Heart right ventricle (tissue), 16 donors: ENCODE measurements at regions of chr12 and their contacts with region 1.

Region 1: GRCh38 chr12:79935021-79935623 is at the start of gene PPP1R12A:
- DNase-seq: peak; percentile 98
- ATAC-seq: peak; percentile 97 to 100 (median 98)
- H3K4me3 ChIP-seq: peak within 1 kb of the TSS; percentile 74 to 97 (median 87)
- H3K27ac ChIP-seq: peak within 1 kb of the TSS; percentile 90 to 98 (median 96)
- H3K4me1 ChIP-seq: peaks cover 0 to 51% (median 44%) of the 10 kb centered on the region in 9 donors
- H3K27me3 ChIP-seq: no peaks in the 10 kb centered on the region
- CTCF ChIP-seq: peak in 6 of 9 donors; percentile 16 to 40 (median 28)
- total RNA-seq, gene PPP1R12A: 46.3 to 73.5 (median 60.5) TPM

Region 2: DNA sequence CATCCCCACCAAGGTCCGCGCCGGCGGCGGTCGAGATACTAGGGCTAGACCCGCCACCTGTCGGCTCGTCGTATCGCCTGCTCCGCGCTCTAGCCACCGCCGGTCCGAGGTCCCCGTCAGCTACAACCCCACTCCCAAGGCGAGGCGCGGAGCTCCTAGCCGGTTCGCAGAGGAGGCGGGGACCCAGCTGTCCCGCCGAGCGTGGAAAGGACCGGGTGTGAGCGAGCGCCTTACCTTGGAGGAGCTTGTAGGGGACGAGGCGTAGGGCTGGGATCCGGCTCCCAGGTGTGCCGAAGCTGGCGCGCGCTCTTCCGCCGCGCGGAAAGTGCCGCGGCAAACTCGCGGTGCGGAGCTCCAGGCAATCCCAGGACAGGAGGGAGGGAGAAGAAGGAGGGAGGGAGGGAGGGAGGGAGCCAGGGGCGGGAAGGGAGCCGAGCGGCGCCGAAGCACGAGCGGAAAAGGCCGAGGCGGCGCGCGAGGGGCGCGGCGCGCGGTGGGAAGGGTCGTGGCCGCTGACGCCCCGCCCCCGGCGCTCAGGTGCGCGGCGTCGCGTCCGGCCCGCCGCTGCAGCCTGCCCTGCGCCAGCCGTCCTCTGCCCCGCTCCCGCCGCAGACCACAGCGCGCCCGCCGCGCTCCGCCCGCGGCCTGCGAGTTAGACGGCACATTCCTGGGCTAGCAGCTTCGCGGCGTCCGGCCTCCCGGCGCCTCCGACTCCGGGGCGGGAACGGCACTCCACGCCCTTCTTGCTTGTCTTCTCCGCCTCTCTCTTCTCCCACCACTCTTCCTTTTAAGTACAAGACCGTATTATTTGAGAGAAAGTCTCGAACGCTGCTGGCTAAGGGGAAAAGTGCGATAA is 244.3 kb before region 1 on chr12 and contains the start of gene PAWR:
- intact Hi-C with region 1: loop called in 2 of 10 experiments (anchors 1 to 10 kb)
- DNase-seq: peak; percentile 22 to 53
- ATAC-seq: peak; percentile 51 to 85 (median 63)
- H3K4me3 ChIP-seq: peak within 1 kb of the TSS; percentile 68 to 92 (median 86)
- H3K27ac ChIP-seq: peak within 1 kb of the TSS in 9 of 10 donors; percentile 53 to 80 (median 73)
- H3K4me1 ChIP-seq: peaks cover 0 to 31% (median 8%) of the 10 kb centered on the region in 9 donors
- H3K27me3 ChIP-seq: peaks cover 0 to 45% (median 7%) of the 10 kb centered on the region in 7 donors
- CTCF ChIP-seq: peak in 4 of 9 donors; percentile 12 to 44 (median 22)
- total RNA-seq, gene PAWR: 3.5 to 16.6 (median 10.2) TPM

Region 3: DNA sequence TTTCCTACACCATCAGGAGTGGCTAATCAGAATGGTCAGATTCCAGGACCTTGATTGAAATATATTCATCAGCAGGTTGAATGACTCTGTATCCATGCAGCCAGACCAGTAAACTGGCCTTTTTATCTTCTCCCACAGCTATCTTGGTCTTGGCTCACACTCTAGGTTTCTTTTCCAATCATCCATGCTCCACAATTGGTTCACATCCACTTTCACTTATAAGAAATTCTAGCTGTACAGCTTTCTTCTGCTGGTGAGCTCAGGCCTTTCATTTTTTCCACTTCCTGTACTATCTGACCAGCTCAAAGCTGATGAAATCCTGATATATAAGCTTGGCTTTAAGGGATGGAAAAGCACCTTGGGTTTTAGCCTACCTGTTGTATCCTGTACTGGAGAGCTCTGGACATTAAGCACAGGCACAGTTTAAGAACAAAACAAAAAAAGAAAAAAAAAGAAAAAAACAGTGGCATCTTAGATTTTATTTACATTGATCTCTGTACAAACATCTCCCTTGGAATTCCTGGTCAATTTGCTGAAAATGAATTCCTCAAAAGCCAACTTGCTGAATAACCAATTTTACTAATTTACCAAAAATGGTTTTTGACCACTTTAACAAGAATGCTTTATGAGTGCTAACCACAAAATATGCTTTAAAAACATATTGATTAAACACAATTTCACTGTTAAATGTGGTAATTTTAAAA is 152.8 kb before region 1 on chr12:
- intact Hi-C with region 1: loop called in 3 of 10 experiments (anchors 10 kb)
- DNase-seq: no peak
- ATAC-seq: peak in 7 of 8 donors; percentile 55 to 88 (median 81)
- H3K4me3 ChIP-seq: no peak overlapping the region
- H3K27ac ChIP-seq: peak overlapping the region in 8 of 10 donors; percentile 9 to 49 (median 36)
- H3K4me1 ChIP-seq: peaks cover 0 to 16% (median 13%) of the 10 kb centered on the region in 9 donors
- H3K27me3 ChIP-seq: no peaks in the 10 kb centered on the region
- CTCF ChIP-seq: no peak

Region 4: GRCh38 chr12:79826267-79827128 is 108.6 kb before region 1 on chr12:
- intact Hi-C with region 1: loop called in 4 of 10 experiments (anchors 10 kb)
- DNase-seq: no peak
- ATAC-seq: no peak
- H3K4me3 ChIP-seq: no peak overlapping the region
- H3K27ac ChIP-seq: no peak overlapping the region
- H3K4me1 ChIP-seq: peaks cover 0 to 56% (median 24%) of the 10 kb centered on the region in 9 donors
- H3K27me3 ChIP-seq: no peaks in the 10 kb centered on the region
- CTCF ChIP-seq: no peak

Region 5: GRCh38 chr12:79873201-79873600 is 61.9 kb before region 1 on chr12:
- intact Hi-C with region 1: no loop called
- DNase-seq: no peak
- ATAC-seq: peak in 3 of 8 donors; percentile 16 to 56 (median 18)
- H3K4me3 ChIP-seq: no peak overlapping the region
- H3K27ac ChIP-seq: peak overlapping the region in 2 of 10 donors; percentile 3 to 57
- H3K4me1 ChIP-seq: peaks cover 0 to 68% (median 8%) of the 10 kb centered on the region in 9 donors
- H3K27me3 ChIP-seq: no peaks in the 10 kb centered on the region
- CTCF ChIP-seq: no peak

Region 6: DNA sequence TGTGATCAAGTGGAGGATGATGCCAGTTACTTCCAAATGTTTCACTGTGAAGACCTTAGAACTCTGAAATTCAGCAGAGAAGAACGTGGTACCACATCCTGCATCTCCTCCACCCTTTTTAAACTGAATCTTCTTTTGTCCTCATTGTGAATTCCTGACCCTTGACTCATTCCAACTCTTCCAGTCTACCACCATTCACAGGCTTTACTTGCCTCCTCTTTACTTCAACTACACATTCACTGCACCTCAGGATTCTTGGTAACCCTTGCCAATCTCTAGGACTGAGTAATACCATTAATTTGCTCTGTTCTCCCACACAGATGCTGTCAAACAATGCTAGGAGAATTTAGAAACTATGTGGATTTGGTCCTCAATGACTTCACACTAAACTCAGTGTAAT is 37.5 kb before region 1 on chr12:
- intact Hi-C with region 1: loop called in 2 of 10 experiments (anchors 5 kb)
- DNase-seq: no peak
- ATAC-seq: peak in 1 of 8 donors; percentile 22
- H3K4me3 ChIP-seq: no peak overlapping the region
- H3K27ac ChIP-seq: no peak overlapping the region
- H3K4me1 ChIP-seq: peaks cover 5 to 86% (median 57%) of the 10 kb centered on the region in 9 donors
- H3K27me3 ChIP-seq: no peaks in the 10 kb centered on the region
- CTCF ChIP-seq: no peak

Region 7: GRCh38 chr12:79911889-79912656 is 23.0 kb before region 1 on chr12:
- intact Hi-C with region 1: no loop called
- DNase-seq: no peak
- ATAC-seq: peak in 1 of 8 donors; percentile 18
- H3K4me3 ChIP-seq: no peak overlapping the region
- H3K27ac ChIP-seq: no peak overlapping the region
- H3K4me1 ChIP-seq: peaks cover 2 to 82% (median 68%) of the 10 kb centered on the region in 9 donors
- H3K27me3 ChIP-seq: no peaks in the 10 kb centered on the region
- CTCF ChIP-seq: no peak

Region 8: GRCh38 chr12:80033448-80033847 is 98.3 kb after region 1 on chr12:
- intact Hi-C with region 1: no loop called
- DNase-seq: peak in 1 of 2 donors; percentile 9
- ATAC-seq: peak in 6 of 8 donors; percentile 46 to 72 (median 57)
- H3K4me3 ChIP-seq: no peak overlapping the region
- H3K27ac ChIP-seq: peak overlapping the region in 3 of 10 donors; percentile 13 to 23 (median 18)
- H3K4me1 ChIP-seq: peaks cover 0 to 11% (median 0%) of the 10 kb centered on the region in 9 donors
- H3K27me3 ChIP-seq: no peaks in the 10 kb centered on the region
- CTCF ChIP-seq: no peak